Endothelial cell of umbilical vein (primary cell): ENCODE measurements at regions of chr3 and their contacts with region 1.

Region 1: DNA sequence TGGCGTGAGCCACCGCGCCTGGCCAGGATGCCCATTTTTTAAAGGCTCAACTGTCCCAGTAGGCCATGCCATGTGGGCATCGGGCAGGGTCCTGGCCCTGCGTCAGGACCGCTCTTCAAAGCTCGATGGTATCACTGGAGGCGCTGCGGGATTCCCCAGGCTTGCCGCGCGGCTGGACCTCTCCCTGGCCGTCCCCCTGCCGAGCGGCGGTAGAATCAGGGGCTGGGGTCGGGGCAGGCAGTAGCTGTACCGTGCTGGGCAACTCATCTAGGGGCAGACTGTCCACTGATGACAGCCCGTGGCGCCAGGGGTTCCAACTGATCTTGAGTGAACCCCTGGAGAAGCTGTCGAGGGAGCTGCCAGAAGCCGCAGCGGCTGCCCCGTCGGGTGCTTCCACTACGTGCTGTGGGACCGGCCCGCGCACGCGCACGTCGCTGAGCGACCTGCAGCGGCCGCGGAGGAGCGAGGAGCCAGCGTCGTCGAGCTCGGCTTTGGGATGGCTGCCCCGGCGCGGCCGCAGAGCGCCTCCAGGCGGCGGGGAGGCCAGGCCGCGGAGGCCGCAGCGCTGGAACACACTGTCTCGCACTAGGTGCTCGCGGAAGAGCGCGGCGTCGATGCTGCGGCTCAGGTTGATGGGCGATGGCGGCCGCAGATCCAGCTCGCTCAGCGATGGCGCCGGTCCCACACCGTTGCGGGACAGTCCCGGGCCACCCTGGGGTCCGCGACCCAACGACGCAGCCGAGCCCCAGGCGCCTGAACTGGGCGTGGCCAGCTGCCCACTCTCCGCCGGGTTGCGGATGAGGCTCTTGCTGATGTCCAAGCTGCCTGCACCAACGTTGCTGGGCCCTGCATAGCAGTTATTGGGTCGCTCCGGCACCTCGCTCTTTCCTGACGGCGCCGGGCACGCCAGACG is 5.8 kb downstream of the PRRT3 start:
- DNase-seq: peak; percentile 94
- H3K4me3 ChIP-seq: peak overlapping the region; percentile 27 to 60 (median 34)
- H3K27ac ChIP-seq: no peak overlapping the region
- H3K4me1 ChIP-seq: peaks cover 3% of the 10 kb centered on the region
- H3K27me3 ChIP-seq: no peaks in the 10 kb centered on the region
- CTCF ChIP-seq: peak; percentile 83 to 85
- POLR2A ChIP-seq: peak; percentile 82

Region 2: DNA sequence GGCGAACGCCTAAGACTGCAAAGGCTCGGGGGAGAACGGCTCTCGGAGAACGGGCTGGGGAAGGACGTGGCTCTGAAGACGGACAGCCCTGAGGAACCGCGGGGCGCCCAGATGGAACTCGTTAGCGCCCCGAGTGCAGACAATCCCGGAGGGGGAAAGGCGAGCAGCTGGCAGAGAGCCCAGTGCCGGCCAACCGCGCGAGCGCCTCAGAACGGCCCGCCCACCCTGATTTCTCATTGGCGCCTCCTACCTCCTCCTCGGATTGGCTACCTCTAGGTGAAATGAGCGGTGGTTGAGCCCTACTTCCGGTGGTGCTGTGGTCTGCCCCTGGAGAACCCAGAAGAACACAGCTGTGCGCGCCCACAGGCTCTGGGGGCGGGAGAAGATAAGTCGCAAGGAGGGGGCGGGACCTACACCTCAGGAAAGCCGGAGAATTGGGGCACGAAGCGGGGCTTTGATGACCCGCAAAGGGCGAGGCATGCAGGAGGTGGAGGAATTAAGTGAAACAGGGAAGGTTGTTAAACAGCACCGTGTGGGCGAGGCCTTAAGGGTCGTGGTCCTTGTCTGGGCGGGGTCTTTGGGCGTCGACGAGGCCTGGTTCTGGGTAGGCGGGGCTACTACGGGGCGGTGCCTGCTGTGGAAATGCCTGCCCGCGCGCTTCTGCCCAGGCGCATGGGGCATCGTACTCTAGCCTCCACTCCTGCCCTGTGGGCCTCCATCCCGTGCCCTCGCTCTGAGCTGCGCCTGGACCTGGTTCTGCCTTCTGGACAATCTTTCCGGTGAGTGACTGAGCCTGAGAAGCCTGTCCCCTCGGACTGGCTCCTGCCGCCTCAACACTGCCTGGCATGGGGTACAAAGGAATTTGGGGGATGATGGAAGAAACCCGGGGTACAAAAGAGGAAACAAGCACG is 196.5 kb before region 1 on chr3 and contains the start of gene OGG1:
- CTCF ChIA-PET with region 1: interaction called, 6 read pairs
- POLR2A ChIA-PET with region 1: no interaction called
- dilution Hi-C with region 1: no loop called
- intact Hi-C with region 1: loop called (anchors 1 kb)
- DNase-seq: peak; percentile 98
- H3K4me3 ChIP-seq: peak within 1 kb of the TSS; percentile 55 to 80 (median 58)
- H3K27ac ChIP-seq: peak within 1 kb of the TSS; percentile 46
- H3K4me1 ChIP-seq: peaks cover 39% of the 10 kb centered on the region
- H3K27me3 ChIP-seq: no peaks in the 10 kb centered on the region
- CTCF ChIP-seq: no peak
- POLR2A ChIP-seq: peak; percentile 85
- total RNA-seq, gene OGG1: 24.1 and 27.2 TPM in 2 replicates

Region 3: GRCh38 chr3:9843715-9844438 is 102.5 kb before region 1 on chr3 and contains the start of gene RPUSD3:
- CTCF ChIA-PET with region 1: interaction called, 35 read pairs
- POLR2A ChIA-PET with region 1: interaction called, 3 read pairs
- dilution Hi-C with region 1: no loop called
- intact Hi-C with region 1: loop called (anchors 1 kb)
- DNase-seq: peak; percentile 96
- H3K4me3 ChIP-seq: peak within 1 kb of the TSS; percentile 64 to 80 (median 77)
- H3K27ac ChIP-seq: peak within 1 kb of the TSS; percentile 11
- H3K4me1 ChIP-seq: peaks cover 14% of the 10 kb centered on the region
- H3K27me3 ChIP-seq: no peaks in the 10 kb centered on the region
- CTCF ChIP-seq: no peak
- POLR2A ChIP-seq: peak; percentile 77
- total RNA-seq, gene RPUSD3: 34.8 and 38.9 TPM in 2 replicates

Region 4: DNA sequence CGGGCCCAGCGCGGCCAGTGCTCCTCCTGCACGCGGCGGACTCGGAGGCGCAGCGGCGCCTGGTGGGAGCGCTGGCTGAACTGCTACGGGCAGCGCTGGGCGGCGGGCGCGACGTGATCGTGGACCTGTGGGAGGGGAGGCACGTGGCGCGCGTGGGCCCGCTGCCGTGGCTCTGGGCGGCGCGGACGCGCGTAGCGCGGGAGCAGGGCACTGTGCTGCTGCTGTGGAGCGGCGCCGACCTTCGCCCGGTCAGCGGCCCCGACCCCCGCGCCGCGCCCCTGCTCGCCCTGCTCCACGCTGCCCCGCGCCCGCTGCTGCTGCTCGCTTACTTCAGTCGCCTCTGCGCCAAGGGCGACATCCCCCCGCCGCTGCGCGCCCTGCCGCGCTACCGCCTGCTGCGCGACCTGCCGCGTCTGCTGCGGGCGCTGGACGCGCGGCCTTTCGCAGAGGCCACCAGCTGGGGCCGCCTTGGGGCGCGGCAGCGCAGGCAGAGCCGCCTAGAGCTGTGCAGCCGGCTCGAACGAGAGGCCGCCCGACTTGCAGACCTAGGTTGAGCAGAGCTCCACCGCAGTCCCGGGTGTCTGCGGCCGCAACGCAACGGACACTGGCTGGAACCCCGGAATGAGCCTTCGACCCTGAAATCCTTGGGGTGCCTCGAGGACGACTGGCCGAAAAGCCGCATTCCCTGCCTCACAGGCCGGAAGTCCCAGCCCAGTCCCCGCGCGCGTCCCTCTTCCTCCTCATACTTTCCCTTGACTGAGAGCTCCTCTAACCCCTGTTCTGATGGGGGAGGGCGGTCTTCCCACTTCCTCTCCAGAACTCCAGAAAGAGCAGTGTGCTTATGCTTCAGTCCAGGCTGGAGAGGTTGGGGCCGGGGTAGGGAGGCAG is 30.9 kb before region 1 on chr3:
- CTCF ChIA-PET with region 1: interaction called, 8 read pairs
- POLR2A ChIA-PET with region 1: interaction called, 5 read pairs
- dilution Hi-C with region 1: no loop called
- intact Hi-C with region 1: loop called (anchors 1 kb)
- DNase-seq: peak; percentile 50
- H3K4me3 ChIP-seq: peak overlapping the region in 2 of 3 experiments; percentile 29 to 39
- H3K27ac ChIP-seq: no peak overlapping the region
- H3K4me1 ChIP-seq: peaks cover 13% of the 10 kb centered on the region
- H3K27me3 ChIP-seq: no peaks in the 10 kb centered on the region
- CTCF ChIP-seq: peak; percentile 32 to 57
- POLR2A ChIP-seq: peak; percentile 29

Region 5: GRCh38 chr3:9976721-9977709 is 30.6 kb after region 1 on chr3:
- CTCF ChIA-PET with region 1: interaction called, 17 read pairs
- POLR2A ChIA-PET with region 1: interaction called, 5 read pairs
- dilution Hi-C with region 1: no loop called
- intact Hi-C with region 1: no loop called
- DNase-seq: peak; percentile 96
- H3K4me3 ChIP-seq: no peak overlapping the region
- H3K27ac ChIP-seq: peak overlapping the region; percentile 94
- H3K4me1 ChIP-seq: peaks cover 18% of the 10 kb centered on the region
- H3K27me3 ChIP-seq: no peaks in the 10 kb centered on the region
- CTCF ChIP-seq: no peak
- POLR2A ChIP-seq: no peak

Region 6: GRCh38 chr3:10248184-10249080 is 302.1 kb after region 1 on chr3 and contains the start of gene TATDN2:
- CTCF ChIA-PET with region 1: interaction called, 4 read pairs
- POLR2A ChIA-PET with region 1: no interaction called
- dilution Hi-C with region 1: no loop called
- intact Hi-C with region 1: loop called (anchors 1 kb)
- DNase-seq: peak; percentile 95
- H3K4me3 ChIP-seq: peak within 1 kb of the TSS; percentile 20 to 62 (median 58)
- H3K27ac ChIP-seq: peak within 1 kb of the TSS; percentile 18
- H3K4me1 ChIP-seq: peaks cover 14% of the 10 kb centered on the region
- H3K27me3 ChIP-seq: no peaks in the 10 kb centered on the region
- CTCF ChIP-seq: no peak
- POLR2A ChIP-seq: peak; percentile 97
- total RNA-seq, gene TATDN2: 26.8 and 31.7 TPM in 2 replicates